ENCODE measurements at regions of chr1 and their contacts with region 1.

Region 1: DNA sequence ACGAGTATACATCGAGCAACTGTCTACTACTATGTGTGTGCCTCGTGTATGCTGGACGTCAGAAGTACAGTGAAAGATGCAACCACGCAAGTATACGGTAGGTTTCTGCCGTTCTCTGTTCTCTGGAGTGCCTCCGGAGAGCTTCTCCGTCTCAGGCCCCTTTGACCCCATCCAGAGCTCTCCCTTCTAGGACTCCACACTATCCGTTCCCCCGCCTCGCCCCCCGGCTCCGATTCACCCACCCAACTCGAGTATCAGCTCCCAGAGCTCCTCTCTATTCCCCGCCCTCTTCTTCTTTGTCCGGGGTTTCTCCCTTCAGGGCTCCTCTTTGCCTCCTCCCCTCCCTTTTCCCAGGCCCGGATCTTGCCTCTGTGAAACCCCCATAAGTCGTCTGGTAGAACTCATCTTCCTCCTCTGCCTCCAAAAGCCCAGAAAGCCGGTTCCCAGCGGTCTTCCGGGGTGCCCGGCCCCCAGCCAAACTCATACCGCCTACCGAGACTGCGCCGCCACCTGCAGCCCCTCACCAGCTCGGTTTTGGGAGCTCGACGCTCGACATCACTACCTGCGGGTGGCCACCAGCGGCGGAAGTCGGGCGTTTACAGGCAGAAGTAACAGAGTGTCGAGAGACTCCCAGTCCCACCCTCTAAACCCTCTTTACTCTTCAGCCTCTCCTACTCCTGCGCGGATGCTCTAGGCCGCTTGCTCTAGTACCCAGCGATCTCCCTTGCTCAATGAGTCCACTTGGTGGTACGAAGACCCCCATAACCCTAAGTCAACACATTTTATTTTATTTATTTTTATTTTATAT is at the start of gene VPS72:
- DNase-seq: peak; percentile 76
- H3K4me3 ChIP-seq: peak within 1 kb of the TSS; percentile 84
- H3K27ac ChIP-seq: peak within 1 kb of the TSS; percentile 91
- H3K27me3 ChIP-seq: no peaks in the 10 kb centered on the region
- CTCF ChIP-seq: no peak
- polyA plus RNA-seq, gene VPS72: 66.8 and 75.1 TPM in 2 replicates

Region 2: DNA sequence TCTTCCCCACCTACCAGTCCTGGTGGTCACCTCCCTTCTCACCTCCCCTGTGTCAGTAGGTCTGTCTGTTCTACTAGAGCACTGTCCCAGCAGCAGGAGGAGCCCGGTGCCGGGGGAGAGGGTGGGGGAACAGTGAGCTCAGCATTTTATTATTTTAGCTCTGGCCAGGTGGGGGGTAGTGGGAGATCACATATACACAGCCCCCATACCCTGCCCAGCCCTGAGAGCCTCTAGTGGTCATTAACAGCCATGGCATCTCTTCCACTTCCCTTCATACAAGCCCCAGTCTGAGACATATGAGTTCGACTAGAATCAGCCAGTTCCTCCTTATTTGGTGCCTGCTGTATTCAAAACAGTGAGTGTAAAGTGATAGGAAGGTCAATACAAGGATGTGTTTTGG is 13.9 kb before region 1 on chr1 and contains the start of gene TMOD4:
- CTCF ChIA-PET with region 1: interaction called, 13 read pairs
- POLR2A ChIA-PET with region 1: interaction called, 4 read pairs
- DNase-seq: no peak
- H3K4me3 ChIP-seq: no peak within 1 kb of the TSS
- H3K27ac ChIP-seq: peak within 1 kb of the TSS; percentile 39
- H3K27me3 ChIP-seq: no peaks in the 10 kb centered on the region
- CTCF ChIP-seq: peak; percentile 75
- polyA plus RNA-seq, gene TMOD4: not detected in 2 replicates

Region 3: DNA sequence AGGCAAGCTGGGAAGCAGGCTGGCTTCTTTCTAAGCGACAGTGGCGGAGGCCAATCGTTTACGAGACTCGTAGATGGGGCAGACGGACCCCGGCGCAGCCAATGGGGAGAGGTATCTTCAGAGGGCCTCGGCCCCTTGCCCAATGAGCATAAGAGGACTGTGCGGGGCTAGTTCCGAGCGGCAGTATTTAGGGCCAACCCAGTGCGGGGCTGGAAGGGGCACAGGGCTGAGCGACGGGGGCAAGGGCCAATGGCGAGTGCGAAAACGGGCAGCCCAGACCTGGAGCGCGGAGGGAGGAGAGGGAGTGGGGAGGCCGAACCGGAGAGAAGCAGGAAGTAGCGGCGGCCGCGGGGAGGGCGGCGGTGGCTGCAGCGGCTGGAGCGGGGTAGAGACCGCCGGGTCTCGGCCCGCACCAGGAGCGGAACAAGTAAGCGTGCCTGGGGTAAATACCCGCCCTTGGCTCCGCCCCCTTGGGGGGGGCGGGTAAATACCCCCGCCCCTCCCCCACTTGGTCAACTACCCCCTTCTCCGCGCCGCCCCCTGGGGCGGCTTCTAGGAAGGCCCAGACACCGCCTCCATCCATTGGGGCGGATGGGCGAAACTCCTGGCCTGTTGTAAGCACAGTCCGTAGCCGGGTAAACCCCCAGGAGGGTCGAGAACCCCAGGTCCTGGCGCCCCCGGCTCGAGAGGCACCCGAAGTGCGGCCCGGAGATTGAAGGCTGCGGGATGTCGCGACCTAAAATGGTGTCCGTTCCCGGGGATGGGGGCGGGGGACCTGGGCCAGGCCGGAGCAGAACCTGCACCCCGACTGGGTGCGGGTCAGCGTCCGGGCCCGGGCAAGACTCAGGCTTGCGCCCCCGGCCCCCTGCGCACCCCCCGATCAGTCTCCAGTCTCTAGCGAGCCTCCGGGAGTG is 92.4 kb after region 1 on chr1 and contains the start of gene ZNF687:
- CTCF ChIA-PET with region 1: interaction called, 6 read pairs
- POLR2A ChIA-PET with region 1: interaction called, 10 read pairs
- DNase-seq: peak; percentile 100
- H3K4me3 ChIP-seq: peak within 1 kb of the TSS; percentile 98
- H3K27ac ChIP-seq: peak within 1 kb of the TSS; percentile 100
- H3K27me3 ChIP-seq: peaks cover 3% of the 10 kb centered on the region
- CTCF ChIP-seq: no peak
- polyA plus RNA-seq, gene ZNF687: 10.5 and 12.0 TPM in 2 replicates

Region 4: GRCh38 chr1:151539990-151540981 is 350.4 kb after region 1 on chr1 and contains the start of gene TUFT1:
- CTCF ChIA-PET with region 1: no interaction called
- POLR2A ChIA-PET with region 1: no interaction called
- DNase-seq: peak; percentile 78
- H3K4me3 ChIP-seq: peak within 1 kb of the TSS; percentile 83
- H3K27ac ChIP-seq: peak within 1 kb of the TSS; percentile 93
- H3K27me3 ChIP-seq: no peaks in the 10 kb centered on the region
- CTCF ChIP-seq: no peak
- polyA plus RNA-seq, gene TUFT1: 21.9 and 23.9 TPM in 2 replicates

Measured in AG04450 (cell line).